ENCODE measurements at regions of chr6 and their contacts with region 1.

Region 1: GRCh38 chr6:4775584-4776494 is at the start of gene CDYL:
- DNase-seq: peak; percentile 86
- H3K4me3 Mint-ChIP-seq: peak within 1 kb of the TSS; percentile 87
- H3K27ac Mint-ChIP-seq: peak within 1 kb of the TSS; percentile 82
- H3K4me1 Mint-ChIP-seq: peaks cover 49% of the 10 kb centered on the region
- H3K27me3 Mint-ChIP-seq: peaks cover 28% of the 10 kb centered on the region
- total RNA-seq, gene CDYL: 40.0 and 40.9 TPM in 2 replicates

Region 2: DNA sequence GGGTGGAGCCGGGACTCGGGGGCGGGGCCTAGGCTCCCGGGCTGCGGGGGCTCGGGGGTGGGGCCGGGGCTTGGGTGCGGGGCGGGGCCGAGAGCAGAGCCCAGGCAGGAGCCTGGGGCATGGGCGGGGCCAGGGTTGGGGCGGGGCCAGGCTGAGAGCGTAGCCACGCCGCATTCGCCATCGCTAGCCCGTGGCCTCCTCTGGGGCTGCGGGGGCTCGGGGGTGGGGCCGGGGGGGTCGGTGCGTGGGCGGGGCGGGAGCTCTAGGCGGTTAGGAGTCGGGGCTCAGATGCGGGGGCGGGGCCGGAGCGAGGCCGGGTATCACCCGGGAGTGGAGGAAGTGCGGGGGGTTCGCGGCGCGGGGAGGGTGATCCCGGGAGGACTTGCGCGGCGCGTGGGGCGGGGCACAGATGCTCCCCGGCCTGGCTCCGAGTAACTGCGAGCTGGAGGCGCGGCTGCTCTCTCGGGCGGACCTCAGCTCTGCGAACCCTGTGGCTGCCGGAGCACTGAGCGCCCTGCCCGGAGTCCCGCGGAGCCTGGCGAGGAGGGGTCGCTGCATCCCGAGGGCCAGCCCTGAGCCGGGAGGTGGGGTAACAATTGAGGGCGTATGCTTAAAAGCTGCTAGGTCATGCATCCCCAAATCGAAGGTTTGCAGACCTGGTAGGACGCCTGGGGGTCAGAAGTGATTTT is 640.0 kb before region 1 on chr6:
- intact Hi-C with region 1: loop called (anchors 5 kb)
- DNase-seq: peak; percentile 91
- H3K4me3 Mint-ChIP-seq: peak overlapping the region; percentile 77
- H3K27ac Mint-ChIP-seq: peak overlapping the region; percentile 81
- H3K4me1 Mint-ChIP-seq: peaks cover 40% of the 10 kb centered on the region
- H3K27me3 Mint-ChIP-seq: peaks cover 2% of the 10 kb centered on the region

Region 3: DNA sequence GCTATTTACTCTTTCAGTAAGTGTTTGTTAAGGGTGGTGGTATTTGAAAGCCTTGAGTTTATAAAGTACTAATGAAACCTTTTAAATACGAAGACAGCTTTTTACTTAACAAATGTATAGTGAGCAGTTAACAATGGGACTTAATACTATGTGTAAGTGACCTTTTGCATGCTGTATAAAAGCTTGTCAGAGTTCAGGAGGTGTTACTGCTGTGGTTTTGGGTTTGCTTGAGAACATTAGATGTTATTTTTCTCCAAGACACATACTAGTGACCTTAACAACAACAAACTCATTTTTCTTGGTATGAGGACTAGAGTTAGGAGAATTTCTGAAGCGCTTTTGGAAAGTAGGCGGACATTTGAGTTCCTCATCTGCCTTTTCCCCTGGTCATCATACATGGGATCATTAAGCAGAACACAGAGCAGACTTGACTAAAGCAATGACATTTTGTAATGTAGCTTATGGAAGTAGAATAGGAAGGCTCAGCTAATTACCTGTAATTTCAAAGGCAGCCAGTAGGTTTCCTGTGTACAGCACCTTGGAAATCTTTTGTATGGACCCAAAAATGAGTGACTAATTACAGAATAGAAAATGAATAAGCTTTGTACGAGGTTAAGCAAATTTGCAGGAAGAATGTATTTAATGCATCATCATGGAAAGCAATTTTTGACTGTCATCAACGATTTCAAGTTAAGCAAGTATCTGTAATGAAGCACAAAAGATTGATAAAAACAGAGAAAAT is 14.5 kb after region 1 on chr6:
- intact Hi-C with region 1: loop called (anchors 1 kb)
- DNase-seq: no peak
- H3K4me3 Mint-ChIP-seq: no peak overlapping the region
- H3K27ac Mint-ChIP-seq: peak overlapping the region; percentile 74
- H3K4me1 Mint-ChIP-seq: peaks cover 35% of the 10 kb centered on the region
- H3K27me3 Mint-ChIP-seq: no peaks in the 10 kb centered on the region

Region 4: GRCh38 chr6:4936681-4937041 is 160.8 kb after region 1 on chr6:
- intact Hi-C with region 1: loop called (anchors 2 kb)
- DNase-seq: no peak
- H3K4me3 Mint-ChIP-seq: no peak overlapping the region
- H3K27ac Mint-ChIP-seq: no peak overlapping the region
- H3K4me1 Mint-ChIP-seq: peaks cover 56% of the 10 kb centered on the region
- H3K27me3 Mint-ChIP-seq: no peaks in the 10 kb centered on the region